Activated CD4-positive, alpha-beta T cell treated with anti-CD3 and anti-CD28 coated beads, Interleukin-2, amount 10 ng/mL, durations not matched to agents 7 days and 5 days (primary cell): ENCODE measurements at regions of chr10 and their contacts with region 1.

Region 1: GRCh38 chr10:128064108-128064969 is 61.9 kb downstream of the MKI67 start:
- DNase-seq: peak; percentile 77
- H3K4me3 Mint-ChIP-seq: peak overlapping the region; percentile 54
- H3K27ac Mint-ChIP-seq: peak overlapping the region; percentile 88
- H3K4me1 Mint-ChIP-seq: peaks cover 61% of the 10 kb centered on the region
- H3K27me3 Mint-ChIP-seq: no peaks in the 10 kb centered on the region

Region 2: DNA sequence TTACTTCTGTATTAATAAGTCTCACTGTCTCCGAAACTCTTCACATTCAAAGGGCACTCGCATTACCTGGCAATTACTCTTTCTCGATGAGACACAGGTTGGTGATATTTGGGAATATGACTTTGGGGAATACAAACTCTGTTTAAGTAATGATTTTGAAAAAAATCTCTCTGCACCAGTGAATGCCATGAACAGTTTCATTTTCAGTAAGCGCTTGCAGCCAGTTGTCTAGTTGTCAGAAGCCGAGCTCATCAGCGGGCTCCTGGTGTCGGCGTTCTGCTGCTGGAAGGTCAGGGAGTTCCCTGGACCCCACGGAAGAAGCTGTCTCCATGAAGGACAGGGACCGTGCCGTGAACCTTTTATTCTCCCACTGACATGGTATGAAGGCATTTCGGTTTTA is 99.7 kb before region 1 on chr10:
- CTCF ChIA-PET with region 1: no interaction called
- POLR2A ChIA-PET with region 1: no interaction called
- DNase-seq: no peak
- H3K4me3 Mint-ChIP-seq: no peak overlapping the region
- H3K27ac Mint-ChIP-seq: no peak overlapping the region
- H3K4me1 Mint-ChIP-seq: no peaks in the 10 kb centered on the region
- H3K27me3 Mint-ChIP-seq: no peaks in the 10 kb centered on the region

Region 3: GRCh38 chr10:128035557-128035973 is 28.8 kb before region 1 on chr10:
- CTCF ChIA-PET with region 1: interaction called, 51 read pairs
- POLR2A ChIA-PET with region 1: no interaction called
- DNase-seq: peak; percentile 62
- H3K4me3 Mint-ChIP-seq: no peak overlapping the region
- H3K27ac Mint-ChIP-seq: no peak overlapping the region
- H3K4me1 Mint-ChIP-seq: no peaks in the 10 kb centered on the region
- H3K27me3 Mint-ChIP-seq: peaks cover 2% of the 10 kb centered on the region

Region 4: GRCh38 chr10:128047351-128047750 is 17.0 kb before region 1 on chr10:
- CTCF ChIA-PET with region 1: interaction called, 24 read pairs
- POLR2A ChIA-PET with region 1: interaction called, 12 read pairs
- DNase-seq: peak; percentile 91
- H3K4me3 Mint-ChIP-seq: peak overlapping the region; percentile 91
- H3K27ac Mint-ChIP-seq: peak overlapping the region; percentile 97
- H3K4me1 Mint-ChIP-seq: peaks cover 57% of the 10 kb centered on the region
- H3K27me3 Mint-ChIP-seq: no peaks in the 10 kb centered on the region